Activated naive CD4-positive, alpha-beta T cell treated with anti-CD3 and anti-CD28 coated beads for 36 hours (primary cell): ENCODE measurements at regions of chr14 and their contacts with region 1.

Region 1: GRCh38 chr14:24279301-24280186 is 8.1 kb upstream of the RABGGTA start:
- DNase-seq: peak; percentile 90
- H3K4me3 Mint-ChIP-seq: peak overlapping the region; percentile 20
- H3K27ac Mint-ChIP-seq: peak overlapping the region; percentile 80
- H3K4me1 Mint-ChIP-seq: peaks cover 52% of the 10 kb centered on the region
- H3K27me3 Mint-ChIP-seq: no peaks in the 10 kb centered on the region

Region 2: GRCh38 chr14:23605931-23606585 is 673.5 kb before region 1 on chr14:
- CTCF ChIA-PET with region 1: no interaction called
- intact Hi-C with region 1: no loop called
- DNase-seq: peak; percentile 20
- H3K4me3 Mint-ChIP-seq: no peak overlapping the region
- H3K27ac Mint-ChIP-seq: no peak overlapping the region
- H3K4me1 Mint-ChIP-seq: peaks cover 35% of the 10 kb centered on the region
- H3K27me3 Mint-ChIP-seq: no peaks in the 10 kb centered on the region

Region 3: DNA sequence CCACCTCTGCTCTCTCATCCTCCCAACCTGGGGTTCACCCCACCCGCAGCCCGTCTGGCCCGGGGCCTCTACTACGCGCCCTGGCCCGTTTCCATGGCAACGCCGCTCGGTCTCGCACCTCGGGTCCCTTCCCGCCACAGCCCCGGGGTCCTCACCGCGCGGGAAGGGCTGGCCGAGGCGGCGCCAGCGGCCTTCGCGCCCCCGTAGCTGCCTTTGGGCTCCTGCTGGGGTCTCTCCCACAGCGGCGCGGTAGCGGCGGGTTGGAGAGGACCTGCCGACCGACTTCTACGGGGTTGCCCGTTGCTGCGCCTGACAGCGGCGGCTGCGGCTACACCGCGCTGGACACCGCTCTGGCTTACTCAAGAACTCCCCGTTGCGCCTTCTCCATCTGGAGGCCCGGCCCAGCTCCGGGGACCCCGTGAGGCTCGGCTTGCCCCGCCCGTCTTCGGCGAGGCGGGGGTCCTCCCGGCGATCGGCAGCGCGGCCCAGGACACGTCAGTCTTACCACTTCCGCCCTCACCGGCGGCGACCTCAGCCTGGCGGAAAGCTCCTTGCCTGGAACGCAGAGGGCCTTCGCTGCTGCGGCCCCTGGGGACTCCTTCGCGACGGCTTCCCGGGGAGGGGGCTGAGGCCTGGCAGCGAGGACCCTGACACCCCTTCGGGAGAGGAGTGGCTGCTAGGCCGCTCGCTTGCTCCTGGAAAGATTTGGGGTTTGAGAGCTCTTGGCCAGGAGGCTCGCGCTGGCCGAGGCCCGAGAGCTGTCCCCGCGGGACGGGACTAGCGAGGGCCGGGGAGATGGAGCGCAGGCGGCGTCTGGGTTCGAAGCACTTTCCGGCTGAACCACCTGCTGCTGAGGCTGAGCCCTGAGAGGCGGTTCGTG is 84.1 kb before region 1 on chr14 and contains the start of gene TM9SF1:
- CTCF ChIA-PET with region 1: no interaction called
- intact Hi-C with region 1: loop called (anchors 1 kb)
- DNase-seq: peak; percentile 89
- H3K4me3 Mint-ChIP-seq: peak within 1 kb of the TSS; percentile 96
- H3K27ac Mint-ChIP-seq: peak within 1 kb of the TSS; percentile 93
- H3K4me1 Mint-ChIP-seq: peaks cover 56% of the 10 kb centered on the region
- H3K27me3 Mint-ChIP-seq: no peaks in the 10 kb centered on the region
- total RNA-seq, gene TM9SF1: 14.7 to 15.1 TPM

Region 4: GRCh38 chr14:24289649-24290249 is 10.2 kb after region 1 on chr14:
- CTCF ChIA-PET with region 1: interaction called, 154 read pairs
- intact Hi-C with region 1: loop called (anchors 1 kb)
- DNase-seq: peak; percentile 93
- H3K4me3 Mint-ChIP-seq: no peak overlapping the region
- H3K27ac Mint-ChIP-seq: peak overlapping the region; percentile 75
- H3K4me1 Mint-ChIP-seq: peaks cover 25% of the 10 kb centered on the region
- H3K27me3 Mint-ChIP-seq: no peaks in the 10 kb centered on the region

Region 5: GRCh38 chr14:24310646-24311604 is 31.4 kb after region 1 on chr14 and contains the start of gene LTB4R:
- CTCF ChIA-PET with region 1: interaction called, 39 read pairs
- intact Hi-C with region 1: loop called (anchors 1 kb)
- DNase-seq: peak; percentile 71
- H3K4me3 Mint-ChIP-seq: peak within 1 kb of the TSS; percentile 71
- H3K27ac Mint-ChIP-seq: peak within 1 kb of the TSS; percentile 68
- H3K4me1 Mint-ChIP-seq: peaks cover 64% of the 10 kb centered on the region
- H3K27me3 Mint-ChIP-seq: no peaks in the 10 kb centered on the region
- total RNA-seq, gene LTB4R: 10.6 to 11.4 TPM